Activated CD4-positive, alpha-beta memory T cell treated with anti-CD3 and anti-CD28 coated beads, Interleukin-2, amount 10 ng/mL, durations not matched to agents 7 days and 5 days (primary cell): ENCODE measurements at regions of chr22 and their contacts with region 1.

Region 1: GRCh38 chr22:36180038-36180880 is 19.7 kb upstream of the APOL3 start:
- DNase-seq: peak; percentile 85
- H3K4me3 Mint-ChIP-seq: no peak overlapping the region
- H3K27ac Mint-ChIP-seq: no peak overlapping the region
- H3K4me1 Mint-ChIP-seq: peaks cover 2% of the 10 kb centered on the region
- H3K27me3 Mint-ChIP-seq: peaks cover 3% of the 10 kb centered on the region

Region 2: GRCh38 chr22:36052505-36053270 is 127.6 kb before region 1 on chr22:
- CTCF ChIA-PET with region 1: no interaction called
- POLR2A ChIA-PET with region 1: no interaction called
- DNase-seq: no peak
- H3K4me3 Mint-ChIP-seq: no peak overlapping the region
- H3K27ac Mint-ChIP-seq: no peak overlapping the region
- H3K4me1 Mint-ChIP-seq: peaks cover 8% of the 10 kb centered on the region
- H3K27me3 Mint-ChIP-seq: peaks cover 12% of the 10 kb centered on the region

Region 3: DNA sequence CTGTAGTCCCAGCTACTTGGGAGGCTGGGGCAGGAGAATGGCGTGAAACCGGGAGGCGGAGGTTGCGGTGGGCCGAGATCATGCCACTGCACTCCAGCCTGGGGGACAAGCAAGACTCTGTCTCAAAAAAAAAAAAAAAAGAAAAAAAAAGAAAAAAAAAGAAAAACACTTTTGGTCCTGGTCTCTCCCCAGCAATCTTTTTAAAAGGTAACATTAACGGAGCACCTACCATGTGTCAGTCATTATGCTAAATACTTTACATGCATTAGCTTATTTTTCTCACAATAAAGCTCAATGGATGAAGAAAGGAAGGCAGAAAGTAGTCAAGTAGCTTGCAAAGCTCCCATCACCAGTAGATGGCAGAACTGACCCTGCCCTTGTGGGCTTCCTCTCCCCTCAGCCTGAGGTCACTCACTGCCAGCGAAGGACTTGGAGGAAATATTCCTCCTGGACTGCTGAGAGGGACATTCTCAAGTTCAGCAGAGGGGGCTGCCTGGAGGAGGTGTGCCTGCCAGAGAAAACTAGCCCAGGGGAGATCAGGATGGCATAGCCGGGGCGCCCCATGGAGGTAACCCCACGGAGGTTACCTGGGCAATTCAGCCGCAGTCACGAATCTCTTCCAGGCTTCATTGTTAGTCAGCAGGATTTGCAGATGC is 35.2 kb before region 1 on chr22:
- CTCF ChIA-PET with region 1: interaction called, 21 read pairs
- POLR2A ChIA-PET with region 1: interaction called, 3 read pairs
- DNase-seq: peak; percentile 37
- H3K4me3 Mint-ChIP-seq: no peak overlapping the region
- H3K27ac Mint-ChIP-seq: no peak overlapping the region
- H3K4me1 Mint-ChIP-seq: peaks cover 3% of the 10 kb centered on the region
- H3K27me3 Mint-ChIP-seq: no peaks in the 10 kb centered on the region

Region 4: GRCh38 chr22:36156515-36157419 is 23.5 kb before region 1 on chr22:
- CTCF ChIA-PET with region 1: interaction called, 15 read pairs
- POLR2A ChIA-PET with region 1: interaction called, 6 read pairs
- DNase-seq: peak; percentile 70
- H3K4me3 Mint-ChIP-seq: peak overlapping the region; percentile 95
- H3K27ac Mint-ChIP-seq: peak overlapping the region; percentile 91
- H3K4me1 Mint-ChIP-seq: peaks cover 87% of the 10 kb centered on the region
- H3K27me3 Mint-ChIP-seq: no peaks in the 10 kb centered on the region

Region 5: DNA sequence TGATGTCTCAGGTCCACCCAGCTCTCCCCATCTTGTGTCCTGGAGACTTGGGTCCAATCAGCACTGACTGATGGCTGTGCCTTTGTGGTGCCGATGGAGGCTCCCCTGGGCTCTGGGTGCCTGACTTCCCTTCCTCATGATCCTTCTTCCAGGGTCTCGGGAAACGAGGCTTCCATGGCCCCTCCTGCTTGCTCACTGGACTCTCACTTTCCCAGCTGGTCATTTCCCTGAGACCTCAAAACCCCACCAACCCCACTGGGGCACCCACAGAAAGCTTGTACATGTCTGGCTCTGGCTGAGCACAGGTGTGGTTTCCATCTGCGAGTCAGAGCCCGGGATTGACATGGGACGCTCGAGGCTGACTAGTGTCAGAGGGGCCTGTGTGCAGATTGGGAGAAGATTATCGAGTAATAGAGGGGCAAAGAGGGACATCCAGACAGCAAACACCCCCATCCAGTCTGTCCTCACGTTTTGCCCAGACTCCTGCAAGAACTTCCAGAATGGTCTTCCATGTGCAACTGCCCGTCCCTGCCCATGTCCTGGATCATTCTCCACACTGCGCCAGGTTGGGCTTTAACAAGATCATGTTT is 87.7 kb after region 1 on chr22:
- CTCF ChIA-PET with region 1: no interaction called
- POLR2A ChIA-PET with region 1: no interaction called
- DNase-seq: no peak
- H3K4me3 Mint-ChIP-seq: no peak overlapping the region
- H3K27ac Mint-ChIP-seq: no peak overlapping the region
- H3K4me1 Mint-ChIP-seq: peaks cover 2% of the 10 kb centered on the region
- H3K27me3 Mint-ChIP-seq: no peaks in the 10 kb centered on the region